Esophagus muscularis mucosa (tissue), 4 donors: ENCODE measurements at regions of chr12 and their contacts with region 1.

Region 1: GRCh38 chr12:96516472-96517430 is 27.4 kb downstream of the CFAP54 start:
- DNase-seq: no peak
- H3K4me3 ChIP-seq: no peak overlapping the region
- H3K27ac ChIP-seq: peak overlapping the region in 1 of 4 donors; percentile 30
- H3K4me1 ChIP-seq: peaks cover 3 to 27% (median 23%) of the 10 kb centered on the region in 4 donors
- H3K27me3 ChIP-seq: no peaks in the 10 kb centered on the region
- CTCF ChIP-seq: peak; percentile 62 to 79 (median 65)
- EP300 ChIP-seq: no peak
- POLR2A ChIP-seq: no peak

Region 2: DNA sequence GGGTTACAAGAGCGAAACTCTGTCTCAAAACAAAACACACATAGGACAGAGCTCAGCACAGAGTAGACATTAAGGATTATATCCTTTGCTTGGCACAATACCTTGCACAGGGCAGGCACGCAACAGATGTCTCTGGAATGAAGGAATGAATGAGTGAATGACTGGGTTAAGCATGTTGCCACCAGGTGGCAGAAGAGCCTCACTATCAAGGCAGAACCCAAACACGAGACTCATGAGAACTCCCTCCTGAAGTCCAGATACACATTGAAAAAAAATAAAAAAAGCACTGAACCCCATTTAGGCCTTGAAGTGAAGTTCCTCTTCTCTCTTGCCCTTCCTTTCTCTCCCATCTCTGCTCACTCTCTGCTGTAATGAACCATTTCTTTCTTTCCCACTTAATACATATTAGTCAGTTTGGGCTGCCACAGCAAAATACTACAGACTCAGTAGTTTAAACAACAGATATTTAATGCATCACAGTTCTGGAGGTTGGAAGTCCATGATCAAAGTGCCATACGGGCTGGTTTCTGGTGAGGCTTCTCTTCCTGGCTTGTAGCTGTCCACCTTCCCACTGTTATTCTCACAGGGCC is 454.8 kb before region 1 on chr12:
- intact Hi-C with region 1: loop called (anchors 2 kb)
- DNase-seq: no peak
- H3K4me3 ChIP-seq: no peak overlapping the region
- H3K27ac ChIP-seq: no peak overlapping the region
- H3K4me1 ChIP-seq: peaks cover 0 to 9% (median 8%) of the 10 kb centered on the region in 4 donors
- H3K27me3 ChIP-seq: no peaks in the 10 kb centered on the region
- CTCF ChIP-seq: peak; percentile 78 to 86 (median 80)
- EP300 ChIP-seq: no peak
- POLR2A ChIP-seq: no peak

Region 3: GRCh38 chr12:96219698-96220206 is 297.0 kb before region 1 on chr12:
- intact Hi-C with region 1: loop called (anchors 5 kb)
- DNase-seq: no peak
- H3K4me3 ChIP-seq: no peak overlapping the region
- H3K27ac ChIP-seq: peak overlapping the region in 3 of 4 donors; percentile 7 to 48 (median 43)
- H3K4me1 ChIP-seq: peaks cover 53 to 65% (median 57%) of the 10 kb centered on the region in 4 donors
- H3K27me3 ChIP-seq: no peaks in the 10 kb centered on the region
- CTCF ChIP-seq: no peak
- EP300 ChIP-seq: no peak
- POLR2A ChIP-seq: no peak

Region 4: GRCh38 chr12:96233939-96234461 is 282.8 kb before region 1 on chr12:
- intact Hi-C with region 1: no loop called
- DNase-seq: peak; percentile 97
- H3K4me3 ChIP-seq: peak overlapping the region in 2 of 4 donors; percentile 3 to 26
- H3K27ac ChIP-seq: peak overlapping the region; percentile 92 to 95 (median 92)
- H3K4me1 ChIP-seq: peaks cover 63 to 100% (median 98%) of the 10 kb centered on the region in 4 donors
- H3K27me3 ChIP-seq: no peaks in the 10 kb centered on the region
- CTCF ChIP-seq: no peak
- EP300 ChIP-seq: peak; percentile 96
- POLR2A ChIP-seq: no peak

Region 5: DNA sequence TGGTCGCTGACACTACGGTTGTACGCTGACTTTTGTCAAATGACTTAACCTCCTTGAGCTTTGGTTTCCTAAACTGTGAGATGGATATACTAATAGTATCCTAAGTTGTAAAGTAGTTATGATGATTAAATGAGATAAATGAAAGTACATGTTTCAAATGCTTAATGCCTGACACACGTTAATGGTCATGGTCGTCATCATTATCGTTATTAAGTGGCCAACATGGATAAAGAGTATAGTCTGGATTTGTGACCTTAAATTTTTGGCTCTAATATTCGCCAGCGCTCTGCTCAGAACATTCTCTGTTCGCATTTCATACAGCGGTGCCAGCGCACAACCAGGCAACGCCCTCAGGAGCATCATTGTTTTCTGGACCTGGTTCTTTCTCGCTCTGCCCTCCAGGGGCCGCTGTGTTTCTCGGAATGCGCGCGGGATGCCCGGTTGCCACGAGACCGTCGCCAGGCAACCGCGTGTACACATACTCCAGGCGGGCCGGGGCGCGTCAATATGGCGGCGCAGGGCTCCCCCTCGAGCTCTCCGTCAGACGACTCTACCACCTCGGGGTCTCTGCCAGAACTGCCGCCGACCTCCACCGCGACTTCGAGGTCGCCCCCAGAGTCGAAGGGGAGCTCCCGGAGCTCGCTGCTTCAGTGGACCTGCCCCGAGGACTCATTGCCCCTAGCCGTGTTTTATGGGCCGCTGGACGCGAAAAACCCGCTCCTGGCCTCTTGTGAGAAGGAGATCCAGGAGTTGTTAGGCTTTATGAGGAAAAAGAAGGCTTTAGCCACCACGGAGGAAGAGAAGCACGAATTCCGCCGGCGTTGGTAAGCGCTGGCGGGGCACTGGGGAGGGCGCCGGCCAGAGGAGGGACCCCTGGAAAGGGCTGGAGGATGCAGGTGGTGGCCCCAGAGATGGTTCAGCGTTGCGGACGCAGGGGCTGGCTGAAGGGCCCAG is 27.4 kb before region 1 on chr12 and contains the start of gene CFAP54:
- intact Hi-C with region 1: loop called (anchors 2 kb)
- DNase-seq: peak; percentile 99
- H3K4me3 ChIP-seq: peak within 1 kb of the TSS; percentile 70 to 88 (median 78)
- H3K27ac ChIP-seq: peak within 1 kb of the TSS; percentile 72 to 90 (median 83)
- H3K4me1 ChIP-seq: peaks cover 4 to 27% (median 12%) of the 10 kb centered on the region in 4 donors
- H3K27me3 ChIP-seq: no peaks in the 10 kb centered on the region
- CTCF ChIP-seq: peak; percentile 79 to 95 (median 93)
- EP300 ChIP-seq: peak; percentile 33
- POLR2A ChIP-seq: no peak
- total RNA-seq, gene CFAP54: 3.0 to 5.8 (median 4.3) TPM